B cell (primary cell): ENCODE measurements at regions of chr7 and their contacts with region 1.

Region 1: GRCh38 chr7:38398725-38399321 is 125.4 kb upstream of the TARP start:
- DNase-seq: peak; percentile 66
- ATAC-seq: peak; percentile 80
- H3K4me3 ChIP-seq: no peak overlapping the region
- H3K4me3 Mint-ChIP-seq: no peak overlapping the region
- H3K27ac ChIP-seq: no peak overlapping the region
- H3K27ac Mint-ChIP-seq: no peak overlapping the region
- H3K4me1 ChIP-seq: peaks cover 12 to 18% of the 10 kb centered on the region in 2 donors
- H3K4me1 Mint-ChIP-seq: peaks cover 23% of the 10 kb centered on the region
- H3K27me3 ChIP-seq: no peaks in the 10 kb centered on the region
- H3K27me3 Mint-ChIP-seq: peaks cover 8% of the 10 kb centered on the region
- CTCF ChIP-seq: peak; percentile 99

Region 2: DNA sequence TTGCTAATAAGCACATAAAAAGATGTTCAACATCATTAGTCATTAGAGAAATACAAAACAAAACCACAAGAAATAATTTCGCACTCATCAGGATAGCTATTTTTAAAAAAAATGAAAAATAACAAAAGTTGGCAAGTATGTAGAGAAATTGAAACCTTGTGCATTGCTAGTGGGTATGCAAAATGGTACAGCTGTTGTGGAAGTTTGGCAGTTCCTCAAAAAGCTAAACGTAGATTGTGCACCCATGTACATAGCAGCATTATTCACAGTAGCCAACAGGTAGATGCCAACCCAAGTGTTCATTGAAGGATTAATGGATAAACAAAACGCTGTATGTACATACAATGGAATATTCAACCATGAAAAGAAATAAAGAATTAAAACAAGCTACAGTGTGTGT is 256.1 kb before region 1 on chr7:
- CTCF ChIA-PET with region 1: no interaction called
- POLR2A ChIA-PET with region 1: no interaction called
- intact Hi-C with region 1: no loop called
- DNase-seq: peak; percentile 7
- ATAC-seq: no peak
- H3K4me3 ChIP-seq: no peak overlapping the region
- H3K4me3 Mint-ChIP-seq: no peak overlapping the region
- H3K27ac ChIP-seq: no peak overlapping the region
- H3K27ac Mint-ChIP-seq: no peak overlapping the region
- H3K4me1 ChIP-seq: no peaks in the 10 kb centered on the region
- H3K4me1 Mint-ChIP-seq: peaks cover 6% of the 10 kb centered on the region
- H3K27me3 ChIP-seq: no peaks in the 10 kb centered on the region
- H3K27me3 Mint-ChIP-seq: peaks cover 13% of the 10 kb centered on the region
- CTCF ChIP-seq: no peak

Region 3: GRCh38 chr7:38411404-38411803 is 12.6 kb after region 1 on chr7:
- CTCF ChIA-PET with region 1: interaction called, 18 read pairs
- POLR2A ChIA-PET with region 1: no interaction called
- intact Hi-C with region 1: no loop called
- DNase-seq: no peak
- ATAC-seq: no peak
- H3K4me3 ChIP-seq: no peak overlapping the region
- H3K4me3 Mint-ChIP-seq: no peak overlapping the region
- H3K27ac ChIP-seq: no peak overlapping the region
- H3K27ac Mint-ChIP-seq: no peak overlapping the region
- H3K4me1 ChIP-seq: peaks cover 37 to 39% of the 10 kb centered on the region in 2 donors
- H3K4me1 Mint-ChIP-seq: peaks cover 40% of the 10 kb centered on the region
- H3K27me3 ChIP-seq: no peaks in the 10 kb centered on the region
- H3K27me3 Mint-ChIP-seq: no peaks in the 10 kb centered on the region
- CTCF ChIP-seq: no peak

Region 4: DNA sequence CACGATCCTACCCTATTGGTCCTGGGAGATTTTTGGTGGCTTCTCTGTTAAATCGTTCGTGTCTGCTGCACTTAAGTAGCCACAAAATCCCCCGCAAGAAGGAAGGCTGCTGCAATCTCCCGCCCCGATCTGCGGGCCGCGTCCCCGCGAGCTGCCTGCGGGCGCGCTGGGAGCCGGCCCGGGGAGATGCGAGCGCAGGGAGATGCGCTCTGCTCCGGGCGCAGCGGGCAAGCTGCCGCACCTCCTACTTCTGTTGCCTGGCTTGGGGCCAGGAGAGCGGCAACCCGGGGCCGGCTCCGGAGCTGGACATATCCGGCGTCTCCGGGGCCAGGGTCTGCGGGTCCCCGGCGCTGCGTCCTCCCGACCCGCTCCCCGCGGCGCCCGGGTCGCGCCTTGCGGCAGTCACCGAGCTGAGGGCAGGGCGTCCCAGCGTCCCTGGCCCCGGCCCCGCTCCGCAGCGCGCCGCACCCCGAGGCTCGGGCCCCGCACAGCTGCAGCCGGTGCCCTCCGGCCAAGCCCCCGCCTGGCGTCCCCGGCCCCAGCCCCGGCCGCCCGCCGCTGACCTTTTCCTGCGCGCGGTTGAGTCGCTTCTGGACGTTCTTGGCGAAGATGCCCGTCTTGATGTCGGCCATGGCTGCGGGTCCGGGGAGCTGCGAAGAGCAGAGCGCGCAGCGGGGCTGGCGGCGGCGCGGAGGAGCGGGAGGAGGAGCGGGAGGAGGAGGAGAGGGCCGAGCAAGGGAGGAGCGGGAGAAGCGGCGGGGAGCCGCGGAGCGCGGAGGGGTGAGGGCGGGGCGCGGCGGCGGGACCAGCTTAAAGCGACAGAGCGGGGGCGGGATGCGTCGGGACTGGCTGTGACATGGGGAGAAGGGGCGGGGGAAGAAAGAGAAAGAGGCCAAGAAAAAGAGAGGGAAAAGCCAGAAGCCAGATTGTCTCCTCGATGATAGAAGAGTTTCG is 232.2 kb after region 1 on chr7 and contains the start of gene AMPH:
- CTCF ChIA-PET with region 1: interaction called, 10 read pairs
- POLR2A ChIA-PET with region 1: no interaction called
- intact Hi-C with region 1: no loop called
- DNase-seq: no peak
- ATAC-seq: no peak
- H3K4me3 ChIP-seq: peak within 1 kb of the TSS in 3 of 5 experiments; percentile 24 to 33 (median 25)
- H3K4me3 Mint-ChIP-seq: peak within 1 kb of the TSS; percentile 66
- H3K27ac ChIP-seq: no peak within 1 kb of the TSS
- H3K27ac Mint-ChIP-seq: no peak within 1 kb of the TSS
- H3K4me1 ChIP-seq: peaks cover 0 to 4% of the 10 kb centered on the region in 2 donors
- H3K4me1 Mint-ChIP-seq: peaks cover 11% of the 10 kb centered on the region
- H3K27me3 ChIP-seq: peaks cover 0 to 37% (median 12%) of the 10 kb centered on the region in 4 experiments
- H3K27me3 Mint-ChIP-seq: peaks cover 58% of the 10 kb centered on the region
- CTCF ChIP-seq: no peak
- total RNA-seq, gene AMPH: not detected in 2 replicates

Region 5: GRCh38 chr7:38748056-38748611 is 349.3 kb after region 1 on chr7:
- CTCF ChIA-PET with region 1: interaction called, 5 read pairs
- POLR2A ChIA-PET with region 1: no interaction called
- intact Hi-C with region 1: loop called (anchors 1 kb)
- DNase-seq: peak; percentile 13
- ATAC-seq: no peak
- H3K4me3 ChIP-seq: no peak overlapping the region
- H3K4me3 Mint-ChIP-seq: no peak overlapping the region
- H3K27ac ChIP-seq: no peak overlapping the region
- H3K27ac Mint-ChIP-seq: no peak overlapping the region
- H3K4me1 ChIP-seq: no peaks in the 10 kb centered on the region
- H3K4me1 Mint-ChIP-seq: no peaks in the 10 kb centered on the region
- H3K27me3 ChIP-seq: no peaks in the 10 kb centered on the region
- H3K27me3 Mint-ChIP-seq: no peaks in the 10 kb centered on the region
- CTCF ChIP-seq: peak; percentile 34

Region 6: GRCh38 chr7:39525926-39526325 is 1127.1 kb after region 1 on chr7:
- CTCF ChIA-PET with region 1: interaction called, 11 read pairs
- POLR2A ChIA-PET with region 1: no interaction called
- intact Hi-C with region 1: no loop called
- DNase-seq: no peak
- ATAC-seq: no peak
- H3K4me3 ChIP-seq: no peak overlapping the region
- H3K4me3 Mint-ChIP-seq: no peak overlapping the region
- H3K27ac ChIP-seq: no peak overlapping the region
- H3K27ac Mint-ChIP-seq: no peak overlapping the region
- H3K4me1 ChIP-seq: no peaks in the 10 kb centered on the region
- H3K4me1 Mint-ChIP-seq: no peaks in the 10 kb centered on the region
- H3K27me3 ChIP-seq: no peaks in the 10 kb centered on the region
- H3K27me3 Mint-ChIP-seq: peaks cover 20% of the 10 kb centered on the region
- CTCF ChIP-seq: no peak